ENCODE measurements at regions of chr11 and their contacts with region 1.

Region 1: GRCh38 chr11:65027213-65028067 is at the start of gene SNX15:
- DNase-seq: peak; percentile 93 to 95
- H3K4me3 ChIP-seq: peak within 1 kb of the TSS; percentile 61
- H3K27ac ChIP-seq: peak within 1 kb of the TSS; percentile 81 to 85
- H3K4me1 ChIP-seq: peaks cover 0 to 20% (median 12%) of the 10 kb centered on the region in 4 donors
- H3K27me3 ChIP-seq: no peaks in the 10 kb centered on the region
- CTCF ChIP-seq: peak; percentile 70 to 78

Region 2: DNA sequence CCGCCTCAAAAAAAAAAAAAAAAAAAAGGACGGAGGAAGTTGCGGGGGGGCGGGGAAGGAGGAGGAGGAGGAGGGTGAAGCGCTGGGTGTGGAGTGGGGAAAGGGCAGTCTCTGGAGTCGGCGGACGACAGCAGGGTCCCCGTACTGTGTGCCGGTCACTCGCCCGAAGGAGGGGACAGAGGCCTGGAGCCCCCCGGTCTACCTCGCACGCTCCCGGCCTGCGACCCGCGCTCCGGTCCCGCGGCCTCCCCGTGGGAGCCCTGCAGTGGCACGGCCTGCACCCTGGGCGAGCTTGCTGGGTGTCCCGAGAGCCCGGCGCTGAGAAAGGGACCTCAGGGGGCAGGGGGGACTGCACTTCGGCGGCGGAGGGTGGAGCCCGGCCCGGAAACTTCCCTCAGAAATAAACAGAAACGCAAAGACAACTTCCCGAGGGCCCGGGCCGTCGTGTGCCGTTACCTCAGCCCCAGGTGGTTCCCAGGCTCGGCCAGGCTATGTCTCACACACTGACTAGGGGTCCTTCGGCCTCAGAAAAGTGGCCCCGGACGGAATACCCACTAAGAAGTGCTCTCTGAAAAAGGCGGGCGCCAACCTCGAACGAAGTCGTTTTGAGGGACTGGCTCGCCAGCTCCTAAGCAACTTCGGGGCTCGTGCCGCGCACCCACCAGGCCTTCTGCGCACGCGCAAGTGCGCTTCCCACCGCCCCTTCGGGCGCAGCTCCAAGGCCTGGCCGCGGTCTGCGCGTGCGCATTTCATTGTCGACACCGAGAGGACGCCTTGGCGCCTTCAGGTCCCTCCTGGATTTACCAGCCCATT is 55.8 kb before region 1 on chr11 and contains the start of gene MAJIN:
- intact Hi-C with region 1: no loop called
- DNase-seq: peak; percentile 64 to 84
- H3K4me3 ChIP-seq: peak within 1 kb of the TSS; percentile 34 to 44
- H3K27ac ChIP-seq: peak within 1 kb of the TSS in 1 of 2 donors; percentile 2
- H3K4me1 ChIP-seq: peaks cover 0 to 13% (median 9%) of the 10 kb centered on the region in 4 donors
- H3K27me3 ChIP-seq: peaks cover 0 to 1% of the 10 kb centered on the region in 2 donors
- CTCF ChIP-seq: no peak

Region 3: GRCh38 chr11:65084598-65085375 is 57.3 kb after region 1 on chr11:
- intact Hi-C with region 1: loop called (anchors 5 kb)
- DNase-seq: no peak
- H3K4me3 ChIP-seq: peak overlapping the region; percentile 67 to 70
- H3K27ac ChIP-seq: peak overlapping the region; percentile 87 to 88
- H3K4me1 ChIP-seq: peaks cover 0 to 21% (median 17%) of the 10 kb centered on the region in 4 donors
- H3K27me3 ChIP-seq: no peaks in the 10 kb centered on the region
- CTCF ChIP-seq: no peak